PC-3 (cell line): ENCODE measurements at regions of chr1 and their contacts with region 1.

Region 1: GRCh38 chr1:115323376-115324004 is 14.6 kb downstream of the NGF start:
- DNase-seq: peak; percentile 93
- ATAC-seq: peak; percentile 87
- H3K4me3 ChIP-seq: no peak overlapping the region
- H3K27ac ChIP-seq: peak overlapping the region; percentile 93
- H3K4me1 ChIP-seq: peaks cover 58% of the 10 kb centered on the region
- H3K27me3 ChIP-seq: no peaks in the 10 kb centered on the region
- CTCF ChIP-seq: no peak

Region 2: DNA sequence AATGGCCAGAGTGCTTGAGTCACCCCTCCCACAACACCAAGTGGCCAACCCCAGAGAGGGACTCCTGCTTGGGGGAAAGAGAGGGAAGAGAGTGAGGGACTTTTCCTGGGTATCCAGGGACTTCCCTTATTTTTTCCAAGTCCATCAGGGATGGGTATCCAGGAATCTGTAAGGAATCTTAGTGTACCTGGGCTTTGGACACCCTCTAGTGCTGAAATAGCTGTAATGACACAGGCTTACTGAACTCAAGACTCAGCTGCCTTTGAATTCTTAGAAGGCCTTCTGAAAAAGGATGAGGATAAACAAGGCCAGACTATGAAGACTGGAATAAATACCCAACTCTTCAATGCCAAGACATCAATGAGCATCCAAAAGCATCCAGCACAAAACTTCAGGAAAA is 281.8 kb before region 1 on chr1:
- CTCF ChIA-PET with region 1: no interaction called
- POLR2A ChIA-PET with region 1: no interaction called
- intact Hi-C with region 1: no loop called
- DNase-seq: peak; percentile 63
- ATAC-seq: peak; percentile 85
- H3K4me3 ChIP-seq: no peak overlapping the region
- H3K27ac ChIP-seq: no peak overlapping the region
- H3K4me1 ChIP-seq: no peaks in the 10 kb centered on the region
- H3K27me3 ChIP-seq: peaks cover 5% of the 10 kb centered on the region; the same call in 1 of the 2 replicates
- CTCF ChIP-seq: peak; percentile 74

Region 3: GRCh38 chr1:115219937-115220336 is 103.6 kb before region 1 on chr1:
- CTCF ChIA-PET with region 1: no interaction called
- POLR2A ChIA-PET with region 1: no interaction called
- intact Hi-C with region 1: loop called (anchors 5 kb)
- DNase-seq: no peak
- ATAC-seq: no peak
- H3K4me3 ChIP-seq: no peak overlapping the region
- H3K27ac ChIP-seq: no peak overlapping the region
- H3K4me1 ChIP-seq: peaks cover 49% of the 10 kb centered on the region
- H3K27me3 ChIP-seq: no peaks in the 10 kb centered on the region
- CTCF ChIP-seq: no peak

Region 4: GRCh38 chr1:115377411-115377810 is 53.9 kb after region 1 on chr1:
- CTCF ChIA-PET with region 1: no interaction called
- POLR2A ChIA-PET with region 1: no interaction called
- intact Hi-C with region 1: loop called (anchors 1 kb)
- DNase-seq: peak; percentile 76
- ATAC-seq: peak; percentile 79
- H3K4me3 ChIP-seq: peak overlapping the region; percentile 7; the same call in 1 of the 2 replicates
- H3K27ac ChIP-seq: peak overlapping the region; percentile 62
- H3K4me1 ChIP-seq: peaks cover 26% of the 10 kb centered on the region
- H3K27me3 ChIP-seq: no peaks in the 10 kb centered on the region
- CTCF ChIP-seq: no peak

Region 5: GRCh38 chr1:115430441-115431116 is 107.1 kb after region 1 on chr1:
- CTCF ChIA-PET with region 1: no interaction called
- POLR2A ChIA-PET with region 1: no interaction called
- intact Hi-C with region 1: loop called (anchors 5 kb)
- DNase-seq: peak; percentile 95
- ATAC-seq: peak; percentile 74
- H3K4me3 ChIP-seq: no peak overlapping the region
- H3K27ac ChIP-seq: peak overlapping the region; percentile 92
- H3K4me1 ChIP-seq: peaks cover 58% of the 10 kb centered on the region
- H3K27me3 ChIP-seq: no peaks in the 10 kb centered on the region
- CTCF ChIP-seq: no peak

Region 6: DNA sequence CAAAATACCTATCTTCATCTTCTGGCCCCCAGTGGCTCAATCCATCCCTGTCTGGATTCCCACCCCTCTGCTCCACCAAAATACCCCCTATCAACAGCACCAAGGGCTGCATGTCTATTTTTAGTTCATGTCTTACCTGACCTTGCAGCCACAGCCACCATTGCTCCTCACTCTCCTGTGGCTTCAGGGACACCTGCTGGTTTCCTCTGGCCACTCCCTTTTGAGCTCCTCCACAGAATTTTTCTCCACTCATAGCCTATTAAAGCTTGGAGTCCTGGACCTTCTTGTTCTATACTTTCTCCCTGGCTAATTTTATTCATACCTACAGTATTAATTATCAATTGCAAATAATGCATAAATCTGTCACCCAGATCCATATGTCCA is 139.9 kb after region 1 on chr1:
- CTCF ChIA-PET with region 1: interaction called, 3 read pairs
- POLR2A ChIA-PET with region 1: no interaction called
- intact Hi-C with region 1: loop called (anchors 5 kb)
- DNase-seq: peak; percentile 63
- ATAC-seq: peak; percentile 75
- H3K4me3 ChIP-seq: no peak overlapping the region
- H3K27ac ChIP-seq: no peak overlapping the region
- H3K4me1 ChIP-seq: peaks cover 11% of the 10 kb centered on the region
- H3K27me3 ChIP-seq: no peaks in the 10 kb centered on the region
- CTCF ChIP-seq: peak; percentile 82

Region 7: GRCh38 chr1:115506926-115507589 is 183.6 kb after region 1 on chr1:
- CTCF ChIA-PET with region 1: no interaction called
- POLR2A ChIA-PET with region 1: no interaction called
- intact Hi-C with region 1: loop called (anchors 1 kb)
- DNase-seq: peak; percentile 47
- ATAC-seq: peak; percentile 48
- H3K4me3 ChIP-seq: no peak overlapping the region
- H3K27ac ChIP-seq: peak overlapping the region; percentile 31
- H3K4me1 ChIP-seq: peaks cover 52% of the 10 kb centered on the region
- H3K27me3 ChIP-seq: no peaks in the 10 kb centered on the region
- CTCF ChIP-seq: peak; percentile 65

Region 8: GRCh38 chr1:115595279-115596079 is 272.0 kb after region 1 on chr1:
- CTCF ChIA-PET with region 1: no interaction called
- POLR2A ChIA-PET with region 1: no interaction called
- intact Hi-C with region 1: loop called (anchors 10 kb)
- DNase-seq: peak; percentile 97
- ATAC-seq: peak; percentile 96
- H3K4me3 ChIP-seq: no peak overlapping the region
- H3K27ac ChIP-seq: peak overlapping the region; percentile 1; the same call in 1 of the 2 replicates
- H3K4me1 ChIP-seq: peaks cover 20% of the 10 kb centered on the region
- H3K27me3 ChIP-seq: no peaks in the 10 kb centered on the region
- CTCF ChIP-seq: peak; percentile 96